CD8-positive, alpha-beta T cell (primary cell): ENCODE measurements at regions of chr14 and their contacts with region 1.

Region 1: DNA sequence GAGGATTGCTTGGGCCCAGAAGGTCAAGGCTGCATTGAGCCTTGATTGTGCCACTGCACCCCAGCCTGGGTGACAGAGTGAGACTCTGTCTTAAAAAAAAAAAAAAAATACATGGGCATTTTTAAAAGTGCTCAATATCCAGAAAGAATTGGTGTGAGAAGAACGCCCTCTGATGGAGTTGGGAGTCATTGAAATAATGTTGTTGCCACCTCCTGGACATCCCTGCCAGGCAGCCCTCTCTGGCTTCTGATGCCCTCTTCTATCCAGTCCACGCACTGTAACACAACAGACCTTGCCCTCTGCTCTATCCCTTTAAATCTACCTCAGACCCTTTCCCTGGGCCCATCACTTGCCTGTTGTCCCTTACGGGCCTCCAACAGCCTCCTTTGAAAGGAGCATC is 4.9 kb downstream of the PTGDR start:
- DNase-seq: peak in 3 of 9 experiments; percentile 20 to 79 (median 70)
- ATAC-seq: peak; percentile 45
- H3K4me3 ChIP-seq: peak overlapping the region in 1 of 2 experiments; percentile 62
- H3K4me3 Mint-ChIP-seq: peak overlapping the region; percentile 40
- H3K27ac ChIP-seq: peak overlapping the region in 1 of 2 experiments; percentile 56
- H3K27ac Mint-ChIP-seq: peak overlapping the region; percentile 12
- H3K4me1 ChIP-seq: peaks cover 12% of the 10 kb centered on the region
- H3K4me1 Mint-ChIP-seq: peaks cover 40% of the 10 kb centered on the region
- H3K27me3 ChIP-seq: no peaks in the 10 kb centered on the region
- H3K27me3 Mint-ChIP-seq: peaks cover 24% of the 10 kb centered on the region
- CTCF ChIP-seq: peak; percentile 49

Region 2: DNA sequence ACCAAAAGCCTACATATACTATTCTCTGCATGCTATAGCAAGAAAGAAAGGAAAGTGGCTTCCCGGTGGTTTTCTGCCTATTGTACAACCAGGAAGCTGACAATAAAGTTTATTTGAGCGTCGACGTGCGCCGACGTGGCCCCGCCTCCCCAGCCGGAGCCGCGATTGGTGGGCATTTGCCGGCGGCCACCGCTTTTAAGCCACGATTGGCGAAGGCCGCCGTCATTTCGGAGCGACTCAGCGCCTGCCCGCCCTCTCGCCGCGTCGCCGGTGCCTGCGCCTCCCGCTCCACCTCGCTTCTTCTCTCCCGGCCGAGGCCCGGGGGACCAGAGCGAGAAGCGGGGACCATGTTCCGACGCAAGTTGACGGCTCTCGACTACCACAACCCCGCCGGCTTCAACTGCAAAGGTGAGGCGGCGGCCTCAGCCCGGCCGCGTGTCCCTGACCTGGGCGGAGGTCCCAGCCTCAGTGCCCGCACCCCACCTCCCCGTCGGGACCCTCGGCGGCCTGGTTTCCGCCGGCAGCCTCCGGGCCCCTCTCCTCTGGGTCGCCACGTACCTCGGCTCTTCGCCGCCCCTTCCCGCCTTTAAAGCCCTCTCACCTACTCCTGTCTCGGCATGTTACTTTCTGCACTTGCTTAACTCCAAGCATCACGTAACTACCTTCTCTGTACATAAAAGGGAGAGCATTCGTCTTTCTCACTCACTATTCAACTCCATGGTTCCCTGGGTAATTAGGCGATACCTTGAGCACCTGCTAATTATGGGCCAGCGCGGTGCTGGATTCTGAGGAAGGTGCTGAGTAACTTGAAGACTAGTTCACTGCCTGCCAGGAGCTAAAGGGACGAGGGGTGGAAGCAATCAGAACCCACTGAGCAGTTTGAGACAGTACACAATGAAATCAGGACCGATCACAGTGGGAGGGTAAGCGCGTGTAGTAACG is 282.8 kb before region 1 on chr14 and contains the start of gene RTRAF:
- CTCF ChIA-PET with region 1: interaction called, 15 read pairs
- POLR2A ChIA-PET with region 1: no interaction called
- intact Hi-C with region 1: loop called in 1 of 2 experiments (anchors 2 kb)
- DNase-seq: peak; percentile 77 to 97 (median 91)
- ATAC-seq: peak; percentile 96
- H3K4me3 ChIP-seq: peak within 1 kb of the TSS; percentile 65 to 84
- H3K4me3 Mint-ChIP-seq: peak within 1 kb of the TSS; percentile 94
- H3K27ac ChIP-seq: peak within 1 kb of the TSS; percentile 84 to 85
- H3K27ac Mint-ChIP-seq: peak within 1 kb of the TSS; percentile 94
- H3K4me1 ChIP-seq: peaks cover 15% of the 10 kb centered on the region
- H3K4me1 Mint-ChIP-seq: peaks cover 46% of the 10 kb centered on the region
- H3K27me3 ChIP-seq: no peaks in the 10 kb centered on the region
- H3K27me3 Mint-ChIP-seq: no peaks in the 10 kb centered on the region
- CTCF ChIP-seq: no peak
- total RNA-seq, gene RTRAF: 155 to 161 TPM

Region 3: GRCh38 chr14:51996148-51996746 is 276.1 kb before region 1 on chr14:
- CTCF ChIA-PET with region 1: interaction called, 15 read pairs
- POLR2A ChIA-PET with region 1: no interaction called
- intact Hi-C with region 1: loop called (anchors 1 to 2 kb)
- DNase-seq: peak in 2 of 9 experiments; percentile 58 to 68
- ATAC-seq: peak; percentile 52
- H3K4me3 ChIP-seq: no peak overlapping the region
- H3K4me3 Mint-ChIP-seq: no peak overlapping the region
- H3K27ac ChIP-seq: no peak overlapping the region
- H3K27ac Mint-ChIP-seq: no peak overlapping the region
- H3K4me1 ChIP-seq: no peaks in the 10 kb centered on the region
- H3K4me1 Mint-ChIP-seq: peaks cover 38% of the 10 kb centered on the region
- H3K27me3 ChIP-seq: no peaks in the 10 kb centered on the region
- H3K27me3 Mint-ChIP-seq: no peaks in the 10 kb centered on the region
- CTCF ChIP-seq: peak; percentile 78

Region 4: GRCh38 chr14:52146504-52146903 is 125.9 kb before region 1 on chr14:
- CTCF ChIA-PET with region 1: interaction called, 7 read pairs
- POLR2A ChIA-PET with region 1: no interaction called
- intact Hi-C with region 1: loop called in 1 of 2 experiments (anchors 5 kb)
- DNase-seq: peak in 2 of 9 experiments; percentile 20 to 35
- ATAC-seq: no peak
- H3K4me3 ChIP-seq: no peak overlapping the region
- H3K4me3 Mint-ChIP-seq: no peak overlapping the region
- H3K27ac ChIP-seq: no peak overlapping the region
- H3K27ac Mint-ChIP-seq: no peak overlapping the region
- H3K4me1 ChIP-seq: peaks cover 10% of the 10 kb centered on the region
- H3K4me1 Mint-ChIP-seq: peaks cover 38% of the 10 kb centered on the region
- H3K27me3 ChIP-seq: no peaks in the 10 kb centered on the region
- H3K27me3 Mint-ChIP-seq: no peaks in the 10 kb centered on the region
- CTCF ChIP-seq: no peak

Region 5: DNA sequence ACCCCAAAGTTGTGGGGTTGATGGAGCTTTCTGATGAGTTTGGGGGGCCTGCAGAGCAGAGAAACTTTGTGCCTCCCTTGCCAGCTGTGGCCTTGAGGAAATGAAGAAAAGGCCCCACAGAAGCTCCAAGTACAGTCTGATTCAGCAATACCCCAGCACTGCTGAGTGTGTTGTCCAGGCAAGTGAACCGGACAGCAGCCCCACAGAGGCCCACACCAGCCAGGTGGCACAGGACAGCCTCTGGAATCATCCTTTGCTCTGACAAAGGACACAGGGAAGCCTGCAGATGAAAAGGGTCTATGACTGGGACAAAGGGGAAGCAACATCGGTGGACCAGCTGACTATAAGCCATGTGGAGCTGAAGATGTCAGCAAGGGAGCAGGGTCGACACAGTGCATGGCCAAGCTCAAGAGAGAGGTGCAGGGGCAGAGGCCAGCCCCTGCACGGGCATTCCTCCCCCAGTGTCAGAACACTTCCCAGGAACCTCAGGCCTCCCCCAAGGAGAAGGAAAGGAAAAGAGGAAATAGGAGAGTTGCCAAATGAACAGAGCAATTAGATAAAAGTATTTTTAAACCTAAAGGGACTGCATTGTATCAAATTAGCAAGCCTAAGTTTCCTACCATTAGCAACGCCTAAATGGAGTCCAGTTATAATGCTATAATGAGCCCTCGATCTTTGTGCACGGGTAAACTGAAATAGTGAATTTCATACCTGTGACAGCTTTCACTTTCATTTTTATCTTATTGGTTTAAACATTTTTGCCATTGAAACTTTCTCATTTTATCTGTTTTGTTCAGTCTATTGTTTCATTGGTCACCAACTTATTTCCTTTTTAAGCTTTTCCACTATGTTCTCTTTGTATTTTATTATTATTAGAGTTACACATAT is 51.2 kb before region 1 on chr14:
- CTCF ChIA-PET with region 1: no interaction called
- POLR2A ChIA-PET with region 1: interaction called, 3 read pairs
- intact Hi-C with region 1: loop called in 1 of 2 experiments (anchors 5 kb)
- DNase-seq: peak in 3 of 9 experiments; percentile 11 to 51 (median 39)
- ATAC-seq: no peak
- H3K4me3 ChIP-seq: peak overlapping the region; percentile 22 to 37
- H3K4me3 Mint-ChIP-seq: peak overlapping the region; percentile 86
- H3K27ac ChIP-seq: peak overlapping the region in 1 of 2 experiments; percentile 39
- H3K27ac Mint-ChIP-seq: peak overlapping the region; percentile 90
- H3K4me1 ChIP-seq: peaks cover 6% of the 10 kb centered on the region
- H3K4me1 Mint-ChIP-seq: peaks cover 9% of the 10 kb centered on the region
- H3K27me3 ChIP-seq: no peaks in the 10 kb centered on the region
- H3K27me3 Mint-ChIP-seq: no peaks in the 10 kb centered on the region
- CTCF ChIP-seq: no peak

Region 6: GRCh38 chr14:52248057-52248456 is 24.3 kb before region 1 on chr14:
- CTCF ChIA-PET with region 1: interaction called, 6 read pairs
- POLR2A ChIA-PET with region 1: no interaction called
- intact Hi-C with region 1: loop called in 1 of 2 experiments (anchors 2 kb)
- DNase-seq: peak in 2 of 9 experiments; percentile 55 to 71
- ATAC-seq: peak; percentile 73
- H3K4me3 ChIP-seq: no peak overlapping the region
- H3K4me3 Mint-ChIP-seq: peak overlapping the region; percentile 33
- H3K27ac ChIP-seq: peak overlapping the region in 1 of 2 experiments; percentile 71
- H3K27ac Mint-ChIP-seq: peak overlapping the region; percentile 79
- H3K4me1 ChIP-seq: peaks cover 21% of the 10 kb centered on the region
- H3K4me1 Mint-ChIP-seq: peaks cover 21% of the 10 kb centered on the region
- H3K27me3 ChIP-seq: no peaks in the 10 kb centered on the region
- H3K27me3 Mint-ChIP-seq: no peaks in the 10 kb centered on the region
- CTCF ChIP-seq: no peak

Region 7: DNA sequence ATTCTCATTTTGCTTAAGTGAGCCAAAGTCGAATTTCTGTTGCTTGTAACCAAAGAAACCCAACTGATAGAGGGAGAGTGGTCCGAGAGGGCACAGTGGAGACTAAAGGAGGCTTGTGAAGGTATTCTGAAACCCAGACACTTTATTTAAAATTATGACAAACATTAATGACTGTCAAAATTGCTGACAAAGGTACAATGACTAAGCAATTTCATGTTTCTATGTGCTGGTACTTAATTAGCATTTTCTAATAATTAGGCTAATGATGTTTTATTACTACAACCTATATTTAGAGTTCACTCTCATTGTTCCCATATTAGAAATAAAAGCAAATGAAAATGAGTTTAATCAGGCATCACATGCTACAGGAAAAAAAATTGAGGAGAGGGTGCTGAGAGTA is 158.1 kb after region 1 on chr14:
- CTCF ChIA-PET with region 1: no interaction called
- POLR2A ChIA-PET with region 1: no interaction called
- intact Hi-C with region 1: no loop called
- DNase-seq: no peak
- ATAC-seq: no peak
- H3K4me3 ChIP-seq: no peak overlapping the region
- H3K4me3 Mint-ChIP-seq: no peak overlapping the region
- H3K27ac ChIP-seq: no peak overlapping the region
- H3K27ac Mint-ChIP-seq: no peak overlapping the region
- H3K4me1 ChIP-seq: no peaks in the 10 kb centered on the region
- H3K4me1 Mint-ChIP-seq: no peaks in the 10 kb centered on the region
- H3K27me3 ChIP-seq: no peaks in the 10 kb centered on the region
- H3K27me3 Mint-ChIP-seq: no peaks in the 10 kb centered on the region
- CTCF ChIP-seq: no peak

Region 8: DNA sequence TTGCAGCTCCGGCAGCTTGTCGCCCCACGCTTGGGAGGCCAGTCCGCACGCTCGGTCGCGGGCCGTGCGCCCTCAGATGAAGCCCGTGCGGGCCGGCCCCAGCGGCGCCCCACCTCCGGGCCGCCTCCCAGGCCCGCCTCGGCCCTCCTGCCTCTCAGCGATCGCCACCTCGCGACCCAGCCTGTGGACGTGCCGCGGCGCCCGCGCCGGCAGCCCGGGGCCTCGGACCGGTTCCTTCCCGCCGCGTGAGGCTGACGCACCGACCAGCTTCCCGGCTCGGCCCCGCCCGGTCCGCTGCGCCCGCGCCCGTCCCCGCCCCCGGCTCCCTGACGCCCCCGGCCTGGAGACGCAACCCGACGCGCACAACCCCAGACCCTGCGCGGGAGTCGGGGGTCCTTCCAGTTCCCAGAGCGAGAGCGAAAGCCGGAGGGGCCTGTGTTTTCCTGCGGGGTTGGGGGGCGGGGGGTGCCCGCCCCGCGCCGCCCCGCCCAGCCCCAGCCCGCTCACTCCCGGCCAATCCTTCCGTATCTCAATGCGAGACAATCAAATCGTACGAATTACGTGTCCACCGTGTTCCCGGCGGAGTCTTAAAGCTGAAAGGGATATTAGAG is 423.2 kb after region 1 on chr14 and contains the start of gene ERO1A:
- CTCF ChIA-PET with region 1: no interaction called
- POLR2A ChIA-PET with region 1: no interaction called
- intact Hi-C with region 1: no loop called
- DNase-seq: peak; percentile 20 to 78 (median 61)
- ATAC-seq: peak; percentile 61
- H3K4me3 ChIP-seq: peak within 1 kb of the TSS; percentile 63 to 89
- H3K4me3 Mint-ChIP-seq: peak within 1 kb of the TSS; percentile 97
- H3K27ac ChIP-seq: peak within 1 kb of the TSS; percentile 69 to 78
- H3K27ac Mint-ChIP-seq: peak within 1 kb of the TSS; percentile 96
- H3K4me1 ChIP-seq: peaks cover 34% of the 10 kb centered on the region
- H3K4me1 Mint-ChIP-seq: peaks cover 43% of the 10 kb centered on the region
- H3K27me3 ChIP-seq: no peaks in the 10 kb centered on the region
- H3K27me3 Mint-ChIP-seq: no peaks in the 10 kb centered on the region
- CTCF ChIP-seq: no peak
- total RNA-seq, gene ERO1A: 55.3 to 55.4 TPM